Activated CD4-positive, alpha-beta T cell treated with anti-CD3 and anti-CD28 coated beads for 36 hours (primary cell): ENCODE measurements at regions of chr4 and their contacts with region 1.

Region 1: GRCh38 chr4:164748375-164748774 is 5.6 kb upstream of the SMIM31 start:
- DNase-seq: no peak
- ATAC-seq: no peak
- H3K4me3 Mint-ChIP-seq: no peak overlapping the region
- H3K27ac Mint-ChIP-seq: no peak overlapping the region
- H3K4me1 Mint-ChIP-seq: no peaks in the 10 kb centered on the region
- H3K27me3 Mint-ChIP-seq: peaks cover 2% of the 10 kb centered on the region

Region 2: DNA sequence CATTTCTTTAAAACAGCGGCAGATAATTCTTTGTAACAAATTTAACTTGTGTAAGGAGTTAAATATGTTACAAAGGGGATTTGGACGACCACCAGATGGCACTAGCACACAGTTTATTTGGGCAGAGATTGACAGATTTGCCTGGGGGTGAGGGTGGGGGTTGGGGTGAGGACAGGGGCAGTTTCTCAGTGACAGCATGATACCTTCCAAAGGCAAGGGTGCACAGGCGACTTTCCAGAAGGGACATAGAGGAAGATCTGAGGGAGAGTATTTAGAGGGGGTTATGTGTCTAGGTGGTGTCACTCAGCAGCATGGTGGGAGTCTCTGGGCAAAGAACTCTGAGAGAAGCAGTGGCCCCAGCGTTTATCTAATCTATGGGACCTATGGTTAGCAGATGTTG is 1263.5 kb before region 1 on chr4:
- CTCF ChIA-PET with region 1: no interaction called
- POLR2A ChIA-PET with region 1: no interaction called
- intact Hi-C with region 1: loop called in 1 of 2 experiments (anchors 5 kb)
- DNase-seq: peak; percentile 73
- ATAC-seq: peak; percentile 55
- H3K4me3 Mint-ChIP-seq: no peak overlapping the region
- H3K27ac Mint-ChIP-seq: no peak overlapping the region
- H3K4me1 Mint-ChIP-seq: no peaks in the 10 kb centered on the region
- H3K27me3 Mint-ChIP-seq: peaks cover 4% of the 10 kb centered on the region

Region 3: GRCh38 chr4:163554870-163555465 is 1193.4 kb before region 1 on chr4:
- CTCF ChIA-PET with region 1: no interaction called
- POLR2A ChIA-PET with region 1: no interaction called
- intact Hi-C with region 1: loop called (anchors 2 to 5 kb)
- DNase-seq: no peak
- ATAC-seq: no peak
- H3K4me3 Mint-ChIP-seq: no peak overlapping the region
- H3K27ac Mint-ChIP-seq: no peak overlapping the region
- H3K4me1 Mint-ChIP-seq: peaks cover 34% of the 10 kb centered on the region
- H3K27me3 Mint-ChIP-seq: no peaks in the 10 kb centered on the region

Region 4: DNA sequence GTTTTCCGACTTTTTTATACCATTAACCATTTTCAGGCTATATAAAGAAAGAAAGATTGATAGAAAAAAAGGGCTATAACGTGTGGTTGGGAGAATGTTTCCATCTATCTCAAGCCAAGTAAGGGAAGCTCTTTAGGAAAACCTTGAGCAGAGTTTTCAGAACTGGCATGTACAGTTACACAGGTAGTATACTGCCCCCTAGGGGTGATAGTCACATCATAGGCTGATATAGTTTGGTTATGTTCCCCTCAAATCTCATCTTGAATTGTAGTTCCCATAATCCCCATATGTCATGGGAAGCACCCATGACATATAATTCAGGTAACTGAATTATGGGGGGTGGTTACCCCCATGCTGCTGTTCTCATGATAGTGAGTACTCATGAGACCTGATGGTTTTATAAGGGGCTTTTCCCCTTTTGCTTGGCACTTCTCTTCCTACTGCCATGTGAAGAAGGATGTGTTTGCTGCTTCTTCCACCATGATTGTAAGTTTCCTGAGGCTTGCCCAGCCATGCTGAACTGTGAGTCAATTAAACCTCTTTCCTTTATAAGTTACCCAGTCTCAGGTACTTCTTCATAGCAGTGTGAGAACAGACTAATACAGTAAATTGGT is 1067.1 kb before region 1 on chr4:
- CTCF ChIA-PET with region 1: no interaction called
- POLR2A ChIA-PET with region 1: no interaction called
- intact Hi-C with region 1: loop called in 1 of 2 experiments (anchors 5 kb)
- DNase-seq: peak; percentile 13
- ATAC-seq: peak; percentile 74
- H3K4me3 Mint-ChIP-seq: no peak overlapping the region
- H3K27ac Mint-ChIP-seq: no peak overlapping the region
- H3K4me1 Mint-ChIP-seq: no peaks in the 10 kb centered on the region
- H3K27me3 Mint-ChIP-seq: no peaks in the 10 kb centered on the region

Region 5: DNA sequence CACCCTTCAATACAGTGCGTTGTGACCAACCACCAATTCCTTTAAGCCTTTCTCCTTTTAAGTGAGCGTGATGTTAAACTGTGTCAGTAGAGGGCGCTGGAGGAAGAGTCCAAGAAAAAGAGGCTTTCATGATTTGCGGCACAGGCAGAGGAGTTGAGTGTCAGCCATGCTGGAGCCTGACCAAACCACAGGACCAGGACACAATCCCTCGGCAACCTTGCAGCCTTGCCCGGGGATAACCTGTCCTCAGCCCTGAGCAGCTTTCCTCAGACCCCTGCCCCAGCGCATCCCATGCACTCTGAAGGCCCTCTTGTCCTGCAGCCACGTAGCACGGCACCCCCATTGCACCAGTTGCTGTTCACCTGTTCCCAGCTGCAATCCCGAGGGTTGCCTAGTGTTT is 47.9 kb before region 1 on chr4:
- CTCF ChIA-PET with region 1: no interaction called
- POLR2A ChIA-PET with region 1: no interaction called
- intact Hi-C with region 1: loop called in 1 of 2 experiments (anchors 1 kb)
- DNase-seq: peak; percentile 20
- ATAC-seq: no peak
- H3K4me3 Mint-ChIP-seq: no peak overlapping the region
- H3K27ac Mint-ChIP-seq: no peak overlapping the region
- H3K4me1 Mint-ChIP-seq: no peaks in the 10 kb centered on the region
- H3K27me3 Mint-ChIP-seq: peaks cover 5% of the 10 kb centered on the region

Region 6: GRCh38 chr4:164856396-164856795 is 108.0 kb after region 1 on chr4:
- CTCF ChIA-PET with region 1: no interaction called
- POLR2A ChIA-PET with region 1: no interaction called
- intact Hi-C with region 1: no loop called
- DNase-seq: no peak
- ATAC-seq: no peak
- H3K4me3 Mint-ChIP-seq: no peak overlapping the region
- H3K27ac Mint-ChIP-seq: no peak overlapping the region
- H3K4me1 Mint-ChIP-seq: no peaks in the 10 kb centered on the region
- H3K27me3 Mint-ChIP-seq: peaks cover 2% of the 10 kb centered on the region